A673 (cell line): ENCODE measurements at regions of chr19 and their contacts with region 1.

Region 1: GRCh38 chr19:17482001-17482400 is 11.7 kb downstream of the SLC27A1 start:
- DNase-seq: no peak
- H3K4me3 ChIP-seq: no peak overlapping the region
- H3K27ac ChIP-seq: no peak overlapping the region
- H3K4me1 ChIP-seq: no peaks in the 10 kb centered on the region
- H3K27me3 ChIP-seq: no peaks in the 10 kb centered on the region
- CTCF ChIP-seq: no peak

Region 2: GRCh38 chr19:17441241-17442021 is 40.6 kb before region 1 on chr19:
- CTCF ChIA-PET with region 1: no interaction called
- POLR2A ChIA-PET with region 1: no interaction called
- intact Hi-C with region 1: no loop called
- DNase-seq: peak; percentile 51
- H3K4me3 ChIP-seq: no peak overlapping the region
- H3K27ac ChIP-seq: no peak overlapping the region
- H3K4me1 ChIP-seq: no peaks in the 10 kb centered on the region
- H3K27me3 ChIP-seq: peaks cover 1% of the 10 kb centered on the region
- CTCF ChIP-seq: peak; percentile 61

Region 3: GRCh38 chr19:17470068-17470841 is 11.7 kb before region 1 on chr19 and contains the start of gene SLC27A1:
- CTCF ChIA-PET with region 1: no interaction called
- POLR2A ChIA-PET with region 1: no interaction called
- intact Hi-C with region 1: no loop called
- DNase-seq: peak; percentile 100
- H3K4me3 ChIP-seq: peak within 1 kb of the TSS; percentile 84
- H3K27ac ChIP-seq: peak within 1 kb of the TSS; percentile 63
- H3K4me1 ChIP-seq: peaks cover 8% of the 10 kb centered on the region
- H3K27me3 ChIP-seq: no peaks in the 10 kb centered on the region
- CTCF ChIP-seq: no peak
- total RNA-seq, gene SLC27A1: 3.0 and 6.9 TPM in 2 replicates

Region 4: DNA sequence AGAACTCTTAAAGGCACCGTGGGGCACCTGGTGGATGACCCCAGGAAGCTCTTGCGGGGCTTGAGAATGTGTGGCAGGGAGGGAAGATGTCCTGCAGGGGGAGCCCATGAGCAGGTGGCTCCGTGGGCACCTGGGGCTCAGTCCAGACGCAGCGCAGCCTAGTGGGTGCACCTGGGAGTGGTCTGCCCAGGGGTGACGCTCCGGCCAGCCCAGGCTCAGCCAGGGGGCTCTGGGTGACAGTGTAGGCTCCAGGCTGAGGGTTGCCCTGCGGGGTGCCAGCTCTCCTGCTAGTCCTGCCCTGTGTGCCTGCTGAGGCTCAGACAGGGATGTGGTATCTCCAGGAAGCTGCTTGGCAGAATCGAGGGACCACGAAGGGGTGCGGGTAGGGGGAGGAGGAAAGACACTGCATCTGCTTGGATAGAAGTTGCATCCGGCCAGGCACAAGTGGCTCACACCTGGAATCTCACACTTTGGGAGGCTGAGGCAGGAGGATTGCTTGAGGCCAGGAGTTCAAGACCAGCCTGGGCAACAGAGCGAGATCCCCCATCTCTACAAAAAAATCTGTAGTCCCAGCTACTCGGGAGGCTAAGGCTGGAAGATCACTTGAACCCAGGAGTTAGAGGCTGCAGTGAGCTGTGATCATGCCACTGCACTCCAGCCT is 14.5 kb after region 1 on chr19:
- CTCF ChIA-PET with region 1: interaction called, 15 read pairs
- POLR2A ChIA-PET with region 1: no interaction called
- intact Hi-C with region 1: no loop called
- DNase-seq: peak; percentile 82
- H3K4me3 ChIP-seq: no peak overlapping the region
- H3K27ac ChIP-seq: no peak overlapping the region
- H3K4me1 ChIP-seq: peaks cover 14% of the 10 kb centered on the region
- H3K27me3 ChIP-seq: no peaks in the 10 kb centered on the region
- CTCF ChIP-seq: peak; percentile 99